HEK293 (cell line): ENCODE measurements at regions of chr21 and their contacts with region 1.

Region 1: DNA sequence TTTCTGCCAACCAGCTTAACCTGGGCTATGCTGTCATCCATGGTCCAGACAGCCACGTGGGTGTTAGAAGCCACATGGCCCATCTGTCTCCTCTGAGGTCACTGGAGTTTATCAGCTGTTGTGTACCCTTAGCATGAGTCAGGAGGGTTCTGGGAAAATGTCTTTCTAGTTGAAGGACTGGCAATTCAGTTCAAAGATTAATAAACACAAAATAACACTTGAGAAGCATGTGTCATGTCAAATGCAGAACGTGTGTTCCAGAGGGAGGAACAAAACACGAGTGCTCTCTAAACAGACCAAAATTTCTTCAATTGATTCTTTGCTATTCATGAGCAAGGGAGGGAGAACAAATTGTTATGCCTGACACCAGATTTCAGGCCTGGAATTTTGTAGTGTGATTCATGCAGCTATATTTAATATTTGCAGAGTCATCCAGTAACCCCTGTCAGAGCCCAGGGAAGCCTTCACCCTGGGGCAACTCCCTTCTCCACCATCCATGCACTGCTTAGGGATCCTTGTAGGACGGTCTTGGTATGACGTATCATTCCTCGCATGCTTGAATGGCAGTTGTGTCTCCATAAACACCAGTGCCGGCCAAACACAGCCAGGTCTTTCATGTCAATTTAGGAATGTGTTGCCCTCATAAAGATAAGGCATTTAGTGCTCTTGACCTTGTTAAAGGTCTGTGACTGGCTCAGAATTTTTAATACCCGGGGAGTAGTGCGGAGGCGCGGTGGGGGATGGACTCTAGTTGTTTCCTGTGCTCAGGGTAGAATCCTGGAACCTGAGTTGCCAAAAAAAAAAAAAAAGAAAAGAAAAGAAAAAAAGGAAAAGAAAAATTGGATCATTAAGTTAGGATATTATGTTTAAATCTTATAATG is 27.7 kb upstream of the DYRK1A start:
- H3K4me3 ChIP-seq: peak overlapping the region; percentile 4; the same call in 1 of the 2 replicates
- H3K27ac ChIP-seq: no peak overlapping the region
- H3K4me1 ChIP-seq: no peaks in the 10 kb centered on the region; the same call in 1 of the 2 replicates
- CTCF ChIP-seq: no peak

Region 2: DNA sequence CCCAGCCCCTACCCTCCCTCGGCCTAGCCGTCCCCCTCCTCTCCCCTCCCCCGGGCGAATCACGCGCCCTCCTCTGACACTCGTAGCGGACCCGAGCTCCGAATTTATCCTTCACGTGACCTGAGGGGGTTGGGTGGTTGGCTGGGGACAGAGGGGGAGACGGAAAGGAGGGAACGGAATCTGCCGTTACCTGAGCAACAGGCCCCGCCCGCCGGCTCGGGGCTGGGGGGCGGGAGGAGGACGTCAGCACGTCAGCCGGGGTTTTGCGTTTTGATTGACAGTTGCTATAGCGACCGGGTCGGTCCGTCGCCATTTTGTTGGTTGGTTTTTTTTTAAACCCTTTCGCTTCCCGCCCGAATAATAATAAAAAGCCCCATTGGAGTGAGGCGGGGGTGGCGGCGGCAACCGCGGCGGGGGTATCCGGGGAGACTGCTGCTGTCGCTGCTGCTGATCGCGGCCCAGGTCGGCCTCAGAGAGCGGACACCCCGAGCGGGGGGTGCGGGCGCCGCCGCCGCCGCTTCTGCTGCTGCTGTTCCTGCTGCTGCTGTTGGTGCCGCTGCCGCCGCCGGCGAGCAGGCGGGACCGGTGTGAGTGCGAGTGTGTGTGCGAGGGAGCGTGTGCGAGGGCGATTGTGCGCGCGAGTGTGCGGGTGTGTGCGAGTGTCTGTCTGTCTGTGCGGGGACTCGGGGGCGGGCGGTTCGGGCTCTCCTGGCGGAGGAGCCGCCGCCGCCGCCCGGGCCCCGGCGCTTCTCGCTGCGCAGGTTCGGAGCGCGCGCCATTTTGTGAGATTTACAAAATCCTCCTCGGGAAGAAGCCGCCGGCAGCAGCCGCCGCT is 27.8 kb after region 1 on chr21 and contains the start of gene DYRK1A:
- CTCF ChIA-PET with region 1: interaction called, 4 read pairs
- POLR2A ChIA-PET with region 1: interaction called, 10 read pairs
- H3K4me3 ChIP-seq: peak within 1 kb of the TSS; percentile 100
- H3K27ac ChIP-seq: peak within 1 kb of the TSS; percentile 100
- H3K4me1 ChIP-seq: peaks cover 17% of the 10 kb centered on the region
- CTCF ChIP-seq: peak; percentile 83